Sciatic nerve (tissue), 2 donors: ENCODE measurements at regions of chr1 and their contacts with region 1.

Region 1: DNA sequence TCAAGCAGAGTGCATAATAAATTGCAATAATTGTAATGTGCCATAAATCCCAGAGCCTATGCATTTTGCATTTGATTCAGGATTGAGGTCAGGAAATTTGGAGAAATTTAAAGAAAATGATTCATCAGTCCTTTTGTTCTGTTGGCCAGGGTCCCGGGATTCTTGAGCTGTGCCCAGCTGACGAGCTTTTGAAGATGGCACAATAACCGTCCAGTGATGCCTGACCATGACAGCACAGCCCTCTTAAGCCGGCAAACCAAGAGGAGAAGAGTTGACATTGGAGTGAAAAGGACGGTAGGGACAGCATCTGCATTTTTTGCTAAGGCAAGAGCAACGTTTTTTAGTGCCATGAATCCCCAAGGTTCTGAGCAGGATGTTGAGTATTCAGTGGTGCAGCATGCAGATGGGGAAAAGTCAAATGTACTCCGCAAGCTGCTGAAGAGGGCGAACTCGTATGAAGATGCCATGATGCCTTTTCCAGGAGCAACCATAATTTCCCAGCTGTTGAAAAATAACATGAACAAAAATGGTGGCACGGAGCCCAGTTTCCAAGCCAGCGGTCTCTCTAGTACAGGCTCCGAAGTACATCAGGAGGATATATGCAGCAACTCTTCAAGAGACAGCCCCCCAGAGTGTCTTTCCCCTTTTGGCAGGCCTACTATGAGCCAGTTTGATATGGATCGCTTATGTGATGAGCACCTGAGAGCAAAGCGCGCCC is 8.7 kb downstream of the PROX1 start:
- DNase-seq: no peak
- ATAC-seq: no peak

Region 2: GRCh38 chr1:212760126-212760823 is 1236.2 kb before region 1 on chr1:
- intact Hi-C with region 1: loop called (anchors 5 kb)
- DNase-seq: no peak
- ATAC-seq: no peak

Region 3: DNA sequence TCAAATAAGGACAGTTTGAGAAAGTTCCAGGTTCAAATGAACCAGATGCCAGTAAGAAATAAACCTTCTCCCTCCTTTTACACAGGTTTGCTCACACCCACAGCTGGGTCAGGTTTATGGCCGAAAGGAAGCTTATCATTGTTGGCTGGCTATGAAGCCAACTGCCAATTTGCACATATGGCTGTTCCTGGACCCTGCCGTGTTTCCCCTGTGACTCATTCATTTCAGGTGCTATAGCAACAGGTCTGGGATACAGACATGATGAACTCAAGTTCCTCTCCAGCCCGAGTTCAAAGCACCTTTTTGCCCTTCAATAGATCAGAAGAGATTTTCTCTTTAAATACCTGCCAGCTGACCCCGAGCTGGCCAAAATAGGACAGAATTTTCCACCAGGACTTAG is 150.0 kb after region 1 on chr1:
- intact Hi-C with region 1: no loop called
- DNase-seq: no peak
- ATAC-seq: no peak